ENCODE measurements at regions of chrX and their contacts with region 1.

Region 1: GRCh38 chrX:17046478-17047097 is 100.1 kb downstream of the REPS2 start:
- DNase-seq: peak; percentile 47
- ATAC-seq: peak; percentile 76 to 85

Region 2: DNA sequence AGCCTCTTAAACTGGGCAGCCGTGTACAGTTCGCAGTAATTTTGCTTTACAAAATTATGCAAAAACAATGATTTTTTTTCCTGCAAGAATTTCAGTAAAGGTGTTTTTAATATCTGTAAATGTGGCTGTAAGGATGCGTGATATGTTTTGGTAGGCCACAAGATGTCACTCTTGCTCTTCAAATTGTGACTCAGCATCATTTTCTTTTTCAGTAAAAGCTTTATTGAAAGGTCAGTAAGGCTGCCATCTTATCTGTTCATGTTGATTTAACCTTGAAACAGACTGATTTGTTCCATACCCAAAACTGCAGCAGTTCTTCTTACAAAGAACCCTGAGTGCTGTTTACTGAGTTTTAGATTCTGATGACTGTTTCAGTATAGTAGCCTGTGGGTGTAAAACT is 220.4 kb before region 1 on chrX:
- intact Hi-C with region 1: loop called in 1 of 2 experiments (anchors 2 kb)
- DNase-seq: no peak
- ATAC-seq: peak in 1 of 2 donors; percentile 14

Region 3: GRCh38 chrX:16838202-16839066 is 208.2 kb before region 1 on chrX:
- intact Hi-C with region 1: no loop called
- DNase-seq: no peak
- ATAC-seq: peak; percentile 65 to 72

Region 4: DNA sequence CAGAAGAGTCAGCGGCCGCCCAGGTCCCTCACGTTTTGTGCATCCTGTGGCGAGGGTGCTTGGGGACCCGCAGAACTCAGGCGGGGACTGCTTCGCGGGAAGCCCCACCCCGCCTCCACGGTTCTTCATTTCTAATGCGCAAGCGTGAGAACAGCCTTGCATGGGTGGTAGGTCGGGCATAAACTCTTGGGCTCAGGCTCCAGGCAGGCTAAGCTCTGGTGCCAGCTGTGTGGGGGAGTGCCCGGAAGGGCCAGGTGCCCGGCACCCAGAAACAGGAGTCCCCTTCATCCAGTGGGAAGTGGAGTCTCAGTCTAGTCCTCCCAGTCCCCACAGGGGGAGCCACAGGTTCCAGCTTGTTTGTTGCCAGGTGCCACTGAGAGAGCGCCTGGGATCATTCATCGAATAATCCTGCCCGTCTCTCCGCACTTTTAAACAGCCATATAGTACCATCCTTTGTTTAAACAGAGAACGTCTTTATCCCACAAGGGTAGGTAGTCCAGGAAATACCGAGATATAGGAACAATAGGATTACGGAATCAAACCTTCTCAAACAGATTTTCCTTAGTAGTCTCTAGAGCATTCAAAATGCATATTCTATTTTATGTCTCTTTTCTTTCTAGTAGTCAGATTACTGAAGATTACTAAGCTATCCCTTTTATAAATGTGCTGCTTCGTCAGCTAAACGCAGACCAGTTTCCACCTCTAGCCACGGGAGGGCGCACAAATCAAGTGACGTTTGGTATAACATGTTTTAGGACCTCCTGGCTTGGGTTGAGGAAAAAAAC is 163.7 kb before region 1 on chrX:
- intact Hi-C with region 1: loop called in 1 of 2 experiments (anchors 2 kb)
- DNase-seq: peak; percentile 71
- ATAC-seq: peak; percentile 83 to 92

Region 5: DNA sequence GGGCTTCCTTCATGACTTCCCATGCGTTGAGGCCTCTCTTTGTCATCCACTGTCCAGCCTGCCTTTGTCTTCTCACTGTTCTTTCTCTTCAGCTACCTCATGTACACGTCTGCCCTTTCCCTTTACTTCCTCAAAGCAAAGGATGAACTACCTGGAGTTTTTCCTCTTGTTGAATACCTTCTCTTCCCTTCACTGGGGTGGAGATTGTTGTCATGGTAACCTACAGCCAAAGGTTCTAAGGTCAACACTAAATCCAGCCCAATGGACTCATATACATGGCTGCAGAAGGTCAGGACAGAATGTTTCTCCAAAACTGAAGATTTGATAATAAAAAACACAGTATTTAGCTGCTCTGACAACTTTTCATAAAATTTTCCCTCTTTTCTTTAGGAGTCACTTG is 205.3 kb after region 1 on chrX:
- intact Hi-C with region 1: no loop called
- DNase-seq: no peak
- ATAC-seq: no peak